ENCODE measurements at regions of chr2 and their contacts with region 1.

Region 1: GRCh38 chr2:201118121-201118960 is 2.4 kb downstream of the CFLAR start:
- DNase-seq: peak; percentile 80 to 93 (median 86)
- ATAC-seq: peak; percentile 46
- H3K4me3 ChIP-seq: peak overlapping the region; percentile 84
- H3K4me3 Mint-ChIP-seq: peak overlapping the region; percentile 88
- H3K27ac ChIP-seq: peak overlapping the region; percentile 78 to 98
- H3K27ac Mint-ChIP-seq: peak overlapping the region; percentile 93
- H3K4me1 ChIP-seq: peaks cover 40% of the 10 kb centered on the region
- H3K4me1 Mint-ChIP-seq: peaks cover 67% of the 10 kb centered on the region
- H3K27me3 ChIP-seq: no peaks in the 10 kb centered on the region
- H3K27me3 Mint-ChIP-seq: no peaks in the 10 kb centered on the region
- CTCF ChIP-seq: peak; percentile 67

Region 2: DNA sequence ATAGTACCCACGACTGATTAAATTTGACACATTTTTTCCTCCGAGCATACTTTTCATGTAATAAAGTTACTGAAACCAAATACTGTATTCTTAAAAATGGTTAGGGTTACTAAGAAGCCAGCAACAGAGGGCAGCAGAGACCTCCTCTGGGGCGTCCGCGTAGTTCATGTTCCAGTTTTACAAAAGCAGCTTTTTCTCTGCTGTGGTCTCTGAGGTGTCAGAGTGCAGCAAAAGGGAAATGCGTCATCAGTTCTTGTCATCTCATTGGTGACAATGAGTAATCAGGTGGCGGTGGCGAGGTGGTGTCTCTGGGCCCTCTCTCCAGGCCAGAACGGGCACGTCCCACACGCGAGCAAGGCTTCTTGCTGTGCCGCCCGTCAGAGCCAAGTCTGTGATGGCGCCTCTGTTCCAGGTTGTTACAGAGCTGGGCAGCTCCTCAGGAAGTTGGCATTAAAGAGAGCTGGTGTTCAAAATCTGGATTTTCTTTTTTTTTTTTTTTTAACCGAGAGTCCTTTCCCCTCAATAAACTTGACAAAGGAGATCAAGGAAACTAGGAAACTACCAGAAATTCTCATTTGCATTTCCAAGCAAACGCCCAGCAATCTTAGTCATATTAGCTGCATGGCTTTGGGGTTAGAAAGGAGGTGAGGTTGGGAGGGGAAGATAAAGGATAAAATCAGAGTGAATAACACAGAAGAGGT is 405.2 kb before region 1 on chr2:
- CTCF ChIA-PET with region 1: no interaction called
- POLR2A ChIA-PET with region 1: interaction called, 11 read pairs
- intact Hi-C with region 1: loop called in 1 of 2 experiments (anchors 5 kb)
- DNase-seq: peak; percentile 84 to 98 (median 88)
- ATAC-seq: peak; percentile 96
- H3K4me3 ChIP-seq: peak overlapping the region; percentile 33
- H3K4me3 Mint-ChIP-seq: peak overlapping the region; percentile 77
- H3K27ac ChIP-seq: peak overlapping the region; percentile 81 to 95
- H3K27ac Mint-ChIP-seq: peak overlapping the region; percentile 99
- H3K4me1 ChIP-seq: peaks cover 9% of the 10 kb centered on the region
- H3K4me1 Mint-ChIP-seq: peaks cover 13% of the 10 kb centered on the region
- H3K27me3 ChIP-seq: no peaks in the 10 kb centered on the region
- H3K27me3 Mint-ChIP-seq: no peaks in the 10 kb centered on the region
- CTCF ChIP-seq: peak; percentile 89

Region 3: DNA sequence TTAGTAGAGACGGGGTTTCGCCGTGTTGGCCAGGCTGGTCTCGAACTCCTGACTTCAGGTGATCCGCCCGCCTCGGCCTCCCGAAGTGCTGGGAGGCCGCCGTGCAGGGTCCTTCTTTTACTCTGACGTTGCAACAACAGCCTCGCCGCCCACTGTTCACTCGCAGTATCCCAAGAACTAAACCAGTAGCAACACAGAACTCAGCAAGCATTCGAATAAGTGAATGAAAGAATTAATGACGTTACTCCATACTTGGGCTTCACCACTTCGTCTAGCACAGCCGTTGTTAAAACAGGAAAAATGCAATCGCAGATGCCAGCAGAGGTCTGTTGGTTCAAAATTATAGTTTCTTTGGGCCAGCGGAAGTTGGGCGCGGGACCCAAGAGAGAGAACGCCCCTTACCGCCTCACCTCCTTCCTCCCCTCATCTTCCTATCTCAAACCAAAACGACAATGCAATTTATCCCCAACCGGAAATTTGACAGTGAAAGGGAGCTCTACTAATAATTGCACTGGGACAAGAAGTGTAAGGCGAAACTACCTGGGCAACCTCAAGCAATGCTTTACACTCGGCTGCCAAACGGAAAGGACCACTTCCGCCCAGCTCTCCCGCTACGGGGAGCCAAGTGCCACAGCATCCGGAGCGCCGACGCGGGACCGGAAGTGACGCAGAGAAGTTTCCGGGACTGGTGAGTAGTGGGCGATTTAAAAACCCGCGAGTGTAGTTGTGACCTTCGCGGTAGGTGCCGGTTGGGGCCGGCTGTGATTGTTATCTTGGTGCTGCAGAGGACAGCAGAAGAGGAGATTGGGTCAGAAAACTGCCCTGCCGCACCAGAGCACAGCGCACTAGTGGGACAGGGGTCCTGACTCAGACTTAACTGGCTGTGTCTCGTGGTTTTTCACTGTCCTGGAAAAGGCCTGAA is 229.4 kb before region 1 on chr2 and contains the starts of genes NIF3L1 and PPIL3:
- CTCF ChIA-PET with region 1: no interaction called
- POLR2A ChIA-PET with region 1: interaction called, 58 read pairs
- intact Hi-C with region 1: no loop called
- DNase-seq: peak; percentile 93 to 99 (median 95)
- ATAC-seq: peak; percentile 67
- H3K4me3 ChIP-seq: peak within 1 kb of the TSS; percentile 64
- H3K4me3 Mint-ChIP-seq: peak within 1 kb of the TSS; percentile 94
- H3K27ac ChIP-seq: peak within 1 kb of the TSS; percentile 92 to 94
- H3K27ac Mint-ChIP-seq: peak within 1 kb of the TSS; percentile 99
- H3K4me1 ChIP-seq: peaks cover 36% of the 10 kb centered on the region
- H3K4me1 Mint-ChIP-seq: peaks cover 42% of the 10 kb centered on the region
- H3K27me3 ChIP-seq: no peaks in the 10 kb centered on the region
- H3K27me3 Mint-ChIP-seq: no peaks in the 10 kb centered on the region
- CTCF ChIP-seq: no peak
- total RNA-seq, gene NIF3L1: 6.1 to 6.7 TPM
- total RNA-seq, gene PPIL3: 23.1 to 29.8 TPM

Region 4: DNA sequence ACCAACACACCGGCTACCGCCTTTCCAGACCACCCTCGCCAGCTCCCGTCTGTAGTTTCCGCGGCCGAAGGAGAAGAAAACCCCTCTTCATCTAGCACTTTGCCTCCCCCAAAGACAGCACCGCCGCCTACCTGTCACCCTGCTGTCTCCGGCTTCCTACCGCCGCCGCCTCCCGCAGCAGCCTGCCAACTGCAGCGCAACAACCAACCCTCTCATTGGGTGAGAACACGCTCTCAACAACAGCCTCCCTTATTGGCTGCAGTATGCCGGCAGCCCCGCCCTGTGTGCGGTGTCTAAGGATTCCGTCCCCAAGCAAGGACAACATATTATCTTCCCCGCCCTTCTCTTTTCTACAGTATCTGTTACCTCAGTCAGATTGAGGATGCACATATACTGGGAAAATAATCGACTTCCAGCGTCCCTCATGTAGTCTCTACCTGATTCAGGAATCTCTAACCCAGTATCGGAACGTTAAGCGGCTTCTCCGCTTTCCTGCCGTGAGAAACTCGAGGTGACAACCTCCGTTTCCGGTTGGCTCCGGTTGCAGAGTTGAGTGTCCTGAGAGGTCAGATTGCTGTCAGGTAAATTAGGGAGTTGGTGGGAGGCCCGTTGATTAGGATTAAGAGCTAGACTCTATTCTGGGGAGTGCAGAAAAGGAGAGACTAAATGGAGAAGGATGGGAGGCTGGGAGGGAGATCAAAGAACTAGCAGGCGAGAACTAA is 46.7 kb before region 1 on chr2 and contains the starts of genes HYCC2 and NDUFB3:
- CTCF ChIA-PET with region 1: interaction called, 11 read pairs
- POLR2A ChIA-PET with region 1: interaction called, 103 read pairs
- intact Hi-C with region 1: loop called (anchors 1 to 2 kb)
- DNase-seq: peak; percentile 85 to 98 (median 90)
- ATAC-seq: peak; percentile 92
- H3K4me3 ChIP-seq: peak within 1 kb of the TSS; percentile 87
- H3K4me3 Mint-ChIP-seq: peak within 1 kb of the TSS; percentile 99
- H3K27ac ChIP-seq: peak within 1 kb of the TSS; percentile 84 to 93
- H3K27ac Mint-ChIP-seq: peak within 1 kb of the TSS; percentile 97
- H3K4me1 ChIP-seq: peaks cover 18% of the 10 kb centered on the region
- H3K4me1 Mint-ChIP-seq: peaks cover 50% of the 10 kb centered on the region
- H3K27me3 ChIP-seq: no peaks in the 10 kb centered on the region
- H3K27me3 Mint-ChIP-seq: no peaks in the 10 kb centered on the region
- CTCF ChIP-seq: peak; percentile 39
- total RNA-seq, gene HYCC2: 29.2 to 30.7 TPM
- total RNA-seq, gene NDUFB3: 10.1 to 13.6 TPM

Region 5: GRCh38 chr2:201144101-201145051 is 26.0 kb after region 1 on chr2:
- CTCF ChIA-PET with region 1: interaction called, 15 read pairs
- POLR2A ChIA-PET with region 1: interaction called, 25 read pairs
- intact Hi-C with region 1: no loop called
- DNase-seq: no peak
- ATAC-seq: no peak
- H3K4me3 ChIP-seq: no peak overlapping the region
- H3K4me3 Mint-ChIP-seq: no peak overlapping the region
- H3K27ac ChIP-seq: no peak overlapping the region
- H3K27ac Mint-ChIP-seq: peak overlapping the region; percentile 9
- H3K4me1 ChIP-seq: no peaks in the 10 kb centered on the region
- H3K4me1 Mint-ChIP-seq: peaks cover 19% of the 10 kb centered on the region
- H3K27me3 ChIP-seq: no peaks in the 10 kb centered on the region
- H3K27me3 Mint-ChIP-seq: no peaks in the 10 kb centered on the region
- CTCF ChIP-seq: no peak

Region 6: GRCh38 chr2:201158111-201158929 is 40.0 kb after region 1 on chr2:
- CTCF ChIA-PET with region 1: interaction called, 57 read pairs
- POLR2A ChIA-PET with region 1: interaction called, 76 read pairs
- intact Hi-C with region 1: loop called (anchors 1 kb)
- DNase-seq: peak in 13 of 14 experiments; percentile 20 to 84 (median 50)
- ATAC-seq: peak; percentile 93
- H3K4me3 ChIP-seq: no peak overlapping the region
- H3K4me3 Mint-ChIP-seq: no peak overlapping the region
- H3K27ac ChIP-seq: peak overlapping the region; percentile 52 to 63
- H3K27ac Mint-ChIP-seq: peak overlapping the region; percentile 82
- H3K4me1 ChIP-seq: peaks cover 13% of the 10 kb centered on the region
- H3K4me1 Mint-ChIP-seq: peaks cover 12% of the 10 kb centered on the region
- H3K27me3 ChIP-seq: no peaks in the 10 kb centered on the region
- H3K27me3 Mint-ChIP-seq: no peaks in the 10 kb centered on the region
- CTCF ChIP-seq: peak; percentile 70

Region 7: DNA sequence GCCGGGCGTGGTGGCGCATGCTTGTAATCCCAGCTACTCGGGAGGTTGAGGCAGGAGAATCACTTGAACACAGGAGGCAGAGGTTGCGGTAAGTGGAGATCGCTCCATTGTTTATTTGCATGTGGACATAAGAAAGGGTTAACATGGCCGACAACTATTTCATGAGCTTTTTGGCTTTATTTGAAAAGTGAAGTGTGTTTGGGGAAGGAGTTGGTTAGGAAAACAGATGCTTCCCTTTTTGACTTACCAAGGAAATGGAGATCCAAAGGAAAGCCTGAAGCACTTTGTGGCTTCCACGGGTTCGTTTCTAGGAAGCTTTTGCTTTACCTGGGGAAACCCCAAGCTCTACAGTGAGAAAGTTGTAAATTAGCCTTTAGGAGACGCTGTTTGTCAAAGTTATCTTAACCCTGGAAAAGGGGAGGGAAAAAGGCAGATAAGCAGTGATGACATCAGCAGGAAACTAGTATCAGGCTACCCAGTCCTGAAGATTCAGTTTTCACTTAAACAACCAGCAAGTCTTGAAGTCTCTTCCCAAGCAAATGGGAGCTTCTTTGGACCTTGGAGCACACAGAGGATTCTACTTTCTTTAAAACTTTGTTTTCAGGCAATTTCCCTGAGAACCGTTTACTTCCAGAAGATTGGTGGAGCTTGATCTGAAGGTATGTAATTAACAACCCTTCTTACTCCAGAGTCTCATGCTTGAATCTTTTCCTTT is 64.5 kb after region 1 on chr2 and contains the start of gene CASP10:
- CTCF ChIA-PET with region 1: interaction called, 9 read pairs
- POLR2A ChIA-PET with region 1: interaction called, 19 read pairs
- intact Hi-C with region 1: loop called in 1 of 2 experiments (anchors 5 kb)
- DNase-seq: peak in 4 of 14 experiments; percentile 39 to 89 (median 88)
- ATAC-seq: peak; percentile 89
- H3K4me3 ChIP-seq: peak within 1 kb of the TSS; percentile 77
- H3K4me3 Mint-ChIP-seq: peak within 1 kb of the TSS; percentile 96
- H3K27ac ChIP-seq: peak within 1 kb of the TSS; percentile 62 to 69
- H3K27ac Mint-ChIP-seq: peak within 1 kb of the TSS; percentile 91
- H3K4me1 ChIP-seq: peaks cover 38% of the 10 kb centered on the region
- H3K4me1 Mint-ChIP-seq: peaks cover 45% of the 10 kb centered on the region
- H3K27me3 ChIP-seq: no peaks in the 10 kb centered on the region
- H3K27me3 Mint-ChIP-seq: no peaks in the 10 kb centered on the region
- CTCF ChIP-seq: peak; percentile 64
- total RNA-seq, gene CASP10: 12.6 to 13.7 TPM